Sciatic nerve (tissue), 2 donors: ENCODE measurements at regions of chr22 and their contacts with region 1.

Region 1: GRCh38 chr22:21712894-21713712 is 22.5 kb downstream of the YPEL1 start:
- DNase-seq: peak; percentile 79
- ATAC-seq: peak; percentile 93

Region 2: GRCh38 chr22:21952586-21953571 is 239.8 kb after region 1 on chr22 and contains the start of gene PPM1F:
- intact Hi-C with region 1: loop called (anchors 5 kb)
- DNase-seq: peak; percentile 93
- ATAC-seq: peak; percentile 85
- total RNA-seq, gene PPM1F: 95.5 TPM